Common myeloid progenitor, CD34-positive (primary cell): ENCODE measurements at regions of chr14 and their contacts with region 1.

Region 1: GRCh38 chr14:100256339-100256895 is 17.5 kb downstream of the YY1 start:
- DNase-seq: no peak
- H3K4me3 ChIP-seq: no peak overlapping the region
- H3K27ac ChIP-seq: no peak overlapping the region
- H3K4me1 ChIP-seq: peaks cover under 1 to 3% (median 3%) of the 10 kb centered on the region in 4 experiments
- H3K27me3 ChIP-seq: no peaks in the 10 kb centered on the region

Region 2: GRCh38 chr14:100271247-100271939 is 15.0 kb after region 1 on chr14:
- CTCF ChIA-PET with region 1: interaction called, 14 read pairs
- POLR2A ChIA-PET with region 1: no interaction called
- DNase-seq: peak; percentile 37 to 58 (median 48)
- H3K4me3 ChIP-seq: no peak overlapping the region
- H3K27ac ChIP-seq: no peak overlapping the region
- H3K4me1 ChIP-seq: peaks cover 2 to 13% (median 9%) of the 10 kb centered on the region in 4 experiments
- H3K27me3 ChIP-seq: no peaks in the 10 kb centered on the region